PC-9 (cell line): ENCODE measurements at regions of chr10 and their contacts with region 1.

Region 1: GRCh38 chr10:75827587-75828021 is 396.2 kb downstream of the LRMDA start:
- DNase-seq: no peak
- H3K4me3 ChIP-seq: no peak overlapping the region
- H3K27ac ChIP-seq: no peak overlapping the region
- H3K4me1 ChIP-seq: no peaks in the 10 kb centered on the region
- H3K27me3 ChIP-seq: no peaks in the 10 kb centered on the region
- CTCF ChIP-seq: no peak

Region 2: GRCh38 chr10:75814014-75814413 is 13.6 kb before region 1 on chr10:
- CTCF ChIA-PET with region 1: no interaction called
- POLR2A ChIA-PET with region 1: no interaction called
- intact Hi-C with region 1: loop called (anchors 1 kb)
- DNase-seq: no peak
- H3K4me3 ChIP-seq: no peak overlapping the region
- H3K27ac ChIP-seq: no peak overlapping the region
- H3K4me1 ChIP-seq: no peaks in the 10 kb centered on the region
- H3K27me3 ChIP-seq: no peaks in the 10 kb centered on the region
- CTCF ChIP-seq: no peak

Region 3: DNA sequence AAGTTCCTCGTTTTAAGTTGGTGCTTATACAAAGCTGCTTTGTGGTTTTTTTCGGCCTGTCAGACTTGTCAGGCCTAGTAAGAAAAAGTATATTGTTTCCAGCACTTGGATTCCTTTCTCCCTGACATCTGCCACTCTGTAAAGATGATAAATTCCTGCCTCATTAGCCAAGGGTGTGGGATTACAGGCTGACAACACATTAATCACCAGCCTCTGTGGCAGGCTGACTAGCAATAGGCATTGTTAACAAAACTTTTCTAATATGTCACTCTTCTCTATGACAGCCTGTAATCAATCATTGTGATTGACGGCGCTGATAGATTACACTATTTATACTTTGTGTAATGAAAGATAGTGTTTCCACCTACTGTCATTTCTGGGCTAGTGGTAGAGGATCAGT is 286.4 kb after region 1 on chr10:
- CTCF ChIA-PET with region 1: no interaction called
- POLR2A ChIA-PET with region 1: no interaction called
- intact Hi-C with region 1: no loop called
- DNase-seq: peak in 1 of 2 experiments; percentile 79
- H3K4me3 ChIP-seq: no peak overlapping the region
- H3K27ac ChIP-seq: no peak overlapping the region
- H3K4me1 ChIP-seq: peaks cover 42% of the 10 kb centered on the region
- H3K27me3 ChIP-seq: no peaks in the 10 kb centered on the region
- CTCF ChIP-seq: no peak